OCI-LY7 (cell line): ENCODE measurements at regions of chr16 and their contacts with region 1.

Region 1: DNA sequence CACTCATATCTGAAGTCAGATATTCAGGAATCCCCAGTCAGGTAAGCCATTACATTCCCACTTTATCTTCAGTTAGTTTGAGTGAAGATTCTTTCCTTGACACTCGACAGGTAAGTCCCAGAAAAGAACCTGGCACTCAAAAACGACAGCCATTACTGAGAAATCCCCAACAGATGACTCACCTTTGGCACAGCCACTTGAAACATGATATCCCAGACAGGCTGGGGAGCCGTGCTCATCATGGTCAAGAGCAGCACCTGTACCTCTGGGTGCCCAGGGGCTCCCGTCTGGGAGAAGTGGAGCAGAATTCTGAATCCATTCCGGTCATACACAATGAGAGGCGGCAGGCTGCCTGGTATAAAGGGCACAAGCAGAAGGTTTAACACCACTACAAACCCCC is 16.8 kb upstream of the COG7 start:
- DNase-seq: no peak
- H3K4me3 ChIP-seq: no peak overlapping the region
- H3K27ac ChIP-seq: no peak overlapping the region
- H3K4me1 ChIP-seq: no peaks in the 10 kb centered on the region
- CTCF ChIP-seq: no peak

Region 2: GRCh38 chr16:23195366-23195978 is 274.3 kb before region 1 on chr16:
- CTCF ChIA-PET with region 1: no interaction called
- POLR2A ChIA-PET with region 1: no interaction called
- intact Hi-C with region 1: no loop called
- DNase-seq: no peak
- H3K4me3 ChIP-seq: no peak overlapping the region
- H3K27ac ChIP-seq: no peak overlapping the region
- H3K4me1 ChIP-seq: no peaks in the 10 kb centered on the region
- CTCF ChIP-seq: no peak

Region 3: GRCh38 chr16:23549938-23550337 is 80.1 kb after region 1 on chr16:
- CTCF ChIA-PET with region 1: no interaction called
- POLR2A ChIA-PET with region 1: no interaction called
- intact Hi-C with region 1: loop called (anchors 5 kb)
- DNase-seq: no peak
- H3K4me3 ChIP-seq: no peak overlapping the region
- H3K27ac ChIP-seq: no peak overlapping the region
- H3K4me1 ChIP-seq: peaks cover 10% of the 10 kb centered on the region
- CTCF ChIP-seq: no peak